Vagina (tissue), 2 donors: ENCODE measurements at regions of chrX and their contacts with region 1.

Region 1: DNA sequence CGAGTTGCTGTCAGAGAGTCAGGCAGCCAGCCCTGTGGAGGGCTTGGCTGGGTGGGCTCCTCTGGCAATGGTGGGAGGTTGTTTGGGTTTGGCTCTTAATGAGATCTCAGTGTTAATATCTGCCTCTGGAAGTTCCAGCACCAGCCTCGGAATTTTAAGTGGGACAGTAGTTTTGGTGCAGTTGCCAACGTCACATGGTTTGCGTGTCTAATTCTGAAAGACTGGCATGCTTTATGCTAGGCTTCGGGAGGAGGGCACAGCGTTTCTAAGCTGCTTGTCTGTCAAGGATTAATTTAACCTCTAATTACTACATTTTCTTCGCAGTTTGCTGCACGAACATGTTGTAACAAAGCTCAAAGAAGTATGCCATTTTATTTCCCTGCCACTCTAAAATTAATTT is 9.2 kb downstream of the MAMLD1 start:
- DNase-seq: no peak
- H3K4me3 ChIP-seq: no peak overlapping the region
- H3K27ac ChIP-seq: no peak overlapping the region
- H3K4me1 ChIP-seq: no peaks in the 10 kb centered on the region
- H3K27me3 ChIP-seq: no peaks in the 10 kb centered on the region
- CTCF ChIP-seq: no peak
- POLR2A ChIP-seq: no peak

Region 2: DNA sequence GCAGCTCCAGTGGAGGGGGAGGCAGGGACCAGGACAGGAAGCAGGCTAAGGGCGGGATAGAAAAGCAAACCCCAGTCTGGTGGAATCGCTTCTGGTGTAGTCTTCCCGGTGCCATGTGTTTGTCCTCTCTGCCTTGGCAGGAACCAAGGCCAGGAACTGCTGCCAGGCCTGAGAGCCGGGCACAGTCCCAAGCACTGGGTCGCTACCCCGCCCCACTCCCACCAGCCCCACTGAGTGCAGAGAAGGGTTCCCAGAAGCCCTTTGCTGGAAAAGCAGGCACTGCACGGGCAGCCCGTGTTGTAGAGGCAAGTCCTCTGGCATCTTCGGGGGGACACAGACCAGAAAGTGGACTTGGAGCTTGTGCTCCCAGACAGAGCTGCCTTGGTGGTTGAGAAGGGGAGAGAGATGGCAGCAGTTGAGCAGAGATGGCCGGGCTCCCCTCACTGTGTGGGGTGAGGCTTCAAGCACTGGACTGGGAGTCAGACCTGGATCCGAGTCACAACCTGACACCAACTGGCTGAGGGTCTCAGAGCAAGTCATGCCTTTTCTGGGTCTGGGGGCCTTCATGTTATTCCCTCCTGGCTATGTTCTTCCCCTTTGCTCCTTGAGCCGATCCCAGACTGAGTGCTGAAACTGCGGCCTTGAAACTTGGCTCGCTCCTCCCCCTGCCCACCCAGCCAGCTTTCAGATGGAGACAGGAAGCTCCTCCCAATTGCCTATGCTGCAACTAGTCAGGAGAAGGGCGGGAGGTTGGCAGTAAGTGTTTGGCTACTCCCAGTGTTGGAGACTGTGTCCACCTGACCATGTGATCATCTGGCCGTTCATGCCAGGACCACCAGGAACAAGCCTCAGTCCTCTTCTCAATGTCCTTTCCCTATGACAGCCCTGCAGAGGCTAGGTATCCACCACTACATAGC is 136.4 kb after region 1 on chrX:
- intact Hi-C with region 1: loop called (anchors 10 kb)
- DNase-seq: no peak
- H3K4me3 ChIP-seq: peak overlapping the region; percentile 2 to 3
- H3K27ac ChIP-seq: peak overlapping the region; percentile 57
- H3K4me1 ChIP-seq: peaks cover 14% of the 10 kb centered on the region
- H3K27me3 ChIP-seq: no peaks in the 10 kb centered on the region
- CTCF ChIP-seq: no peak
- POLR2A ChIP-seq: no peak

Region 3: DNA sequence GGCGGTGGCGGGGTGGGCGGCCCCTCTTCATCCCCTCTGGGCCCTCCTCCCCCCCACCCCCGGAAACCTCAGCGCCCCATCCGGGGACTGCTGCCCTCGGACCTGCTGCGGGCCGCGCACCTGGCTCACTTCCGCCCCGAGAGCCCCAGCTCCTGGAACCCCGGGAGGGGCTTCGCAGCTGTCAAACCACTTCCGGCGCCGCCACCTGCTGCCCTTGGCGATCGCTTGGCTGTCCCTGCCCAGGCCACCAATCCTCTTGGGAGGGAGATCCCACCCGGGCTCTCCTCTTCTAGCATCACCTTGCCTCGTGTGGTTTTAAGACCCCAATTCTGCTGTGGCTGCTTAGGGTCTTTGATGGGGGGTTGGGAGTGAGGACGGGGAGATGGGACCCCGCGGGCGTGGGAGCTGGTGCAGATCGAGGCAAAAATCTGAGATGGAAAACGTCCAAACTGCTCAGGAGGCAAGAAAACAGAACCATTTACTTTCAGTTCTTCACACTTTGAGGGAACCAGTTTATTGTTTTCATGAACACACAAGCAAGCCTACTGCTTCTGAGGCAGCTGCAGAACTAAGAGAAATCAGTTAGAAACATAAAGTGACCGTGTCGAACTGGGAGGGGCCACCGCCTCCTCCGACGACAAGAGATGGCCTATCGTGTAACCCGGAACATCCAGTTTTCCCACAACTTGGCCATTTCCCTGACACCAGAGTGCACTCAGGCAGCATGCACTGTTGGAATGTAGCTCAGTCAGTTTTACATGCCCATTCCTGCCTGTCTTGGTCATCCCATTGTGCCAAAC is 321.7 kb after region 1 on chrX:
- intact Hi-C with region 1: no loop called
- DNase-seq: no peak
- H3K4me3 ChIP-seq: peak overlapping the region; percentile 57 to 59
- H3K27ac ChIP-seq: peak overlapping the region; percentile 84
- H3K4me1 ChIP-seq: peaks cover 7% of the 10 kb centered on the region
- H3K27me3 ChIP-seq: no peaks in the 10 kb centered on the region
- CTCF ChIP-seq: no peak
- POLR2A ChIP-seq: no peak